Activated T-helper 2 cell treated with anti-CD3 and anti-CD28 coated beads, Interferon-gamma antibody, Interleukin-2, Interleukin-4, amounts not matched to agents 10 μg/mL and 5 μg/mL and 100 μg/mL, durations not matched to agents 14 hours and 24 hours and 36 hours (primary cell): ENCODE measurements at regions of chr13 and their contacts with region 1.

Region 1: GRCh38 chr13:42969558-42970172 is 22.4 kb downstream of the EPSTI1 start:
- DNase-seq: peak; percentile 63
- H3K4me3 Mint-ChIP-seq: no peak overlapping the region
- H3K27ac Mint-ChIP-seq: no peak overlapping the region
- H3K4me1 Mint-ChIP-seq: peaks cover 23% of the 10 kb centered on the region
- H3K27me3 Mint-ChIP-seq: no peaks in the 10 kb centered on the region

Region 2: DNA sequence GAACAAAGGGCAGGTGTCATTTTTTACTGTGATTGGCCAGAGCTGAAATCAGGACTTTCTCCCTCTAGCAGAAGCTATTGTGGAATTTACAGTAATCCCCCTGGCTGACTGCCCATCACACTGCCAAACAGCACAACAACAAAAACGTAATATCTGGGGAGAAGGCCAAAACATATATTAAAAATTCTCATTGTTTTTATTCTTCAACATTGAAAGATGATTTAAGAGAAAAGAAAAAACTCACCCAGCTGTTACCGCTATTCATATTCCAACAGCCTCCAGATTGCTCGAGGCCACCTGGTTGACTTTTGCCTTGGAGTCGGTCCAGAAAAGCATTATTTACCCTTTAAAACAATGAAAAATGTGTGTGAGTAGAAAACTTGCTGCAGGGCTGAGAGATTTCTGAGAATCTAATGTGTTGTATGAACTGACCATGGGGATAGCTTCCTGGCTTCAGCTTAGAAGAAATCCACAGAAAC is 74.9 kb before region 1 on chr13:
- intact Hi-C with region 1: no loop called
- DNase-seq: no peak
- H3K4me3 Mint-ChIP-seq: no peak overlapping the region
- H3K27ac Mint-ChIP-seq: no peak overlapping the region
- H3K4me1 Mint-ChIP-seq: peaks cover 5% of the 10 kb centered on the region
- H3K27me3 Mint-ChIP-seq: no peaks in the 10 kb centered on the region

Region 3: DNA sequence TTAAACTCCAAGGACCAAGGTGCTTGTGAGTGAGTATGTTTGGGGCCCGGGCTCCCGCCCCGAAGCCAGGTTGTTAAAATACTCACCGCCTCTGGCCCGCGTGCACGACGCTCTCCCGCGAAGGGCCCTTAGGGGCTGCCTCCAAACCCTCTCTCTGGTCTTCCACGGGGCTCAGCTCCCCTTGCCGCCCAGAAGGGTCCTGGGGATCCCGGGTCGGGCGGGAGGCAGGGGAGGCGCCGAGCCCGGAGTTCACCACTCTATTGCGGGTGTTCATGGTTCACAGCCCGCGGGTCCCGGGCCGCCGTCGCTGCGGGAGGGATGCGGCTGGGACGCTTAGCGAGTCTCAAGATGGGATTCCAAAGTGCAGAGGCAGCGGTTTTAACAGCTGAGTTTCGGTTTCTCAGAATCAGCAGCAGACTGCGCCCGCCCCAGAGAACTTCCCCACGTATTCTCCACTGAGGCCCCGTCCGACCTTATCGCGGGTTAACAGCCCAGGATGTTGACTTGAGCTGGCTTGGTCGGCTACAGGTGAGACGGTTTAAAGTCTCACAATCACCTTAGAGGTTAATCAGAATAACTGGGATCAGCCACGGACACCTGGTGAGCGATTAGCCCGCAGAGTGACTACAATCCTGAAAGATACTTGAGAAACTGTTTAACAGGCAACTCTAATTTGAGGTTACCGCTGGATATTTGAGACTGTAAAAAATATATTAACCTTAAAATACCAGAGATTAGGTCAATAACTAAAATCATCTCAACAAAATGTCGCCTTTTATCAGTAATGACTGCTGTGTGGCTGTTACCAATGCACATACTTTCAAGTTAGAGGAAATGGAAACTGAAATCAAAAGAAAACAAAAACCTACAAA is 22.5 kb after region 1 on chr13 and contains the start of gene EPSTI1:
- intact Hi-C with region 1: loop called (anchors 2 kb)
- DNase-seq: peak; percentile 79
- H3K4me3 Mint-ChIP-seq: peak within 1 kb of the TSS; percentile 93
- H3K27ac Mint-ChIP-seq: peak within 1 kb of the TSS; percentile 96
- H3K4me1 Mint-ChIP-seq: peaks cover 64% of the 10 kb centered on the region
- H3K27me3 Mint-ChIP-seq: no peaks in the 10 kb centered on the region
- total RNA-seq, gene EPSTI1: 10.3 and 11.9 TPM in 2 replicates

Region 4: GRCh38 chr13:43023289-43023951 is 53.8 kb after region 1 on chr13 and contains the start of gene DNAJC15:
- intact Hi-C with region 1: loop called (anchors 2 kb)
- DNase-seq: peak; percentile 77
- H3K4me3 Mint-ChIP-seq: peak within 1 kb of the TSS; percentile 91
- H3K27ac Mint-ChIP-seq: peak within 1 kb of the TSS; percentile 81
- H3K4me1 Mint-ChIP-seq: peaks cover 16% of the 10 kb centered on the region
- H3K27me3 Mint-ChIP-seq: no peaks in the 10 kb centered on the region
- total RNA-seq, gene DNAJC15: 18.0 and 18.8 TPM in 2 replicates

Region 5: GRCh38 chr13:43041369-43041921 is 71.8 kb after region 1 on chr13:
- intact Hi-C with region 1: loop called (anchors 5 kb)
- DNase-seq: no peak
- H3K4me3 Mint-ChIP-seq: no peak overlapping the region
- H3K27ac Mint-ChIP-seq: no peak overlapping the region
- H3K4me1 Mint-ChIP-seq: peaks cover 40% of the 10 kb centered on the region
- H3K27me3 Mint-ChIP-seq: no peaks in the 10 kb centered on the region

Region 6: DNA sequence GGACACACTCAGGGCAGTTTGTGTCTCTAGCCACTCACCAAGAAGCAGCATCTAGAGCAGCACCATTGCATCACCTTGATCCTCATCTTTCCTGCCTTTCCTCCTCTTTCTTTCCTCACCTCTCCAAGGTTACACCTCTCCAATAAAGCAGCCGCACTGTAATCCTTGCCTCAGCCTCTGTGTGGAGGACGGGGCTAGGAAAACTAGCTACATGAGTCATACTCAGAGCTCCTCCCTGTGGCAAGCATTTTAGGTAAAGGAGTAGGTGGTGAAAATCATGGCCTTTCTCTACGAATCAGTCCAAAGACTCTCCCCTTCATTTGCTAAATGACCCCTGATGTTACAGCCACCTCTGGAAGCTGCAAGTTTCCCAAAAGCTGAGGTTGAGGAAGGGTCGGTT is 162.6 kb after region 1 on chr13:
- intact Hi-C with region 1: loop called (anchors 1 kb)
- DNase-seq: no peak
- H3K4me3 Mint-ChIP-seq: no peak overlapping the region
- H3K27ac Mint-ChIP-seq: no peak overlapping the region
- H3K4me1 Mint-ChIP-seq: peaks cover 10% of the 10 kb centered on the region
- H3K27me3 Mint-ChIP-seq: peaks cover 14% of the 10 kb centered on the region

Region 7: GRCh38 chr13:43804461-43805070 is 834.9 kb after region 1 on chr13:
- intact Hi-C with region 1: loop called (anchors 1 kb)
- DNase-seq: no peak
- H3K4me3 Mint-ChIP-seq: no peak overlapping the region
- H3K27ac Mint-ChIP-seq: no peak overlapping the region
- H3K4me1 Mint-ChIP-seq: peaks cover 3% of the 10 kb centered on the region
- H3K27me3 Mint-ChIP-seq: peaks cover 12% of the 10 kb centered on the region

Region 8: GRCh38 chr13:43878892-43879754 is 909.5 kb after region 1 on chr13 and contains the start of gene CCDC122:
- intact Hi-C with region 1: loop called (anchors 5 kb)
- DNase-seq: peak; percentile 56
- H3K4me3 Mint-ChIP-seq: peak within 1 kb of the TSS; percentile 77
- H3K27ac Mint-ChIP-seq: peak within 1 kb of the TSS; percentile 68
- H3K4me1 Mint-ChIP-seq: peaks cover 10% of the 10 kb centered on the region
- H3K27me3 Mint-ChIP-seq: peaks cover 46% of the 10 kb centered on the region
- total RNA-seq, gene CCDC122: 0.11 and 0.34 TPM in 2 replicates